MCF 10A (cell line): ENCODE measurements at regions of chr1 and their contacts with region 1.

Region 1: DNA sequence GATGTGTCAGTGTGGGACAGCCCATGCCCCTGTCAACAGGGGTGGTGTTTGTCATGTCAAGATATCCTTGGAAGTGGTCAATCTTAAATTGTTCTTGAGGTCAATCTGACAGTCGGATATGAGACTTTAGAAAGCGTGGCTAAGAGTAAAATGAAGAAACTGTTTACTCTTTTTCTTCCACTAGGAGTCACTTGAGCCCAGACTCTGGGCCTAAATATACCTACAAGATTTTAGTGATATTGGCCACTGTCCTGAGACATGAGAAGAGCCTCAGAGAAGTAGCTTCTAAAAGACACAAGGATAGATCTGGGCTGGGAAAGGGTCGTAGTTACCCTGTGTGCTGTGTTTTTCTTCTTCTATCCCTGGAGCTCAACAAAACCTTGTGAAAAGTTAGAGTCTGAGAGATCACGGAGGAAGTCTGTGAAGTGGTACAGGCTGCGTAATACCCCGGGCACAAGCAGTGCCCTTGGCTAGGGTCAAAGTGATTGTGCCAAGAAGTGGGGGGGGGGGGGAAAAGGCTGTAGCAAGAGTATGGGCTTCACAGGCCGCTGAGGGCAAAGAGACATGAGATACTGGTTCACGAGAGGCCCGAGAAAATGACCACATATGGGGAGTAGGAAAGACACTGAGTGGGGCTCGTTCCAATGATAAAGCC is 355.2 kb upstream of the GREM2 start:
- DNase-seq: peak; percentile 60
- H3K4me3 Mint-ChIP-seq: no peak overlapping the region
- H3K27ac Mint-ChIP-seq: no peak overlapping the region
- H3K4me1 Mint-ChIP-seq: no peaks in the 10 kb centered on the region
- H3K27me3 Mint-ChIP-seq: no peaks in the 10 kb centered on the region
- CTCF ChIP-seq: peak; percentile 76

Region 2: GRCh38 chr1:240732390-240732789 is 234.8 kb before region 1 on chr1:
- CTCF ChIA-PET with region 1: interaction called, 15 read pairs
- POLR2A ChIA-PET with region 1: interaction called, 3 read pairs
- intact Hi-C with region 1: no loop called
- DNase-seq: peak; percentile 86
- H3K4me3 Mint-ChIP-seq: no peak overlapping the region
- H3K27ac Mint-ChIP-seq: no peak overlapping the region
- H3K4me1 Mint-ChIP-seq: peaks cover 6% of the 10 kb centered on the region
- H3K27me3 Mint-ChIP-seq: no peaks in the 10 kb centered on the region
- CTCF ChIP-seq: peak; percentile 92

Region 3: DNA sequence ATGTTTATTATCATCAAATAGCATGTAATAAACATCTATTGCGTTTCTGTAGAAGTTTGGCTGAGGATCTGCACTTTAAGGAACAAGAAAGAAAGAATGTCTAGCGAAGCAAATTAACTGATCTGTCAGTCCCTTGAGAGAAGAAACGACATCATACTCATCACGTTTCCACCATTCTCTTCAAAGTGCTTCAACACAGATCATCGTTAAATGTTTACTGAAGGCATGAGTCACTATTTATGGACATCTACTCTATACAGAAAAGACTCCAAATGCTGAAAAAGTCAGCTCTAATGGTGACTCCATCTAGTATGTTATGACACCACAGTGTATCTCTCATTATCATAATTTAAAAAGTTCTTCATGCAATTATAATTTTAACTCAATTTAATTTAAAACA is 20.7 kb after region 1 on chr1:
- CTCF ChIA-PET with region 1: interaction called, 20 read pairs
- POLR2A ChIA-PET with region 1: interaction called, 4 read pairs
- intact Hi-C with region 1: no loop called
- DNase-seq: peak; percentile 49
- H3K4me3 Mint-ChIP-seq: no peak overlapping the region
- H3K27ac Mint-ChIP-seq: no peak overlapping the region
- H3K4me1 Mint-ChIP-seq: no peaks in the 10 kb centered on the region
- H3K27me3 Mint-ChIP-seq: no peaks in the 10 kb centered on the region
- CTCF ChIP-seq: no peak

Region 4: GRCh38 chr1:241077386-241078147 is 110.4 kb after region 1 on chr1:
- CTCF ChIA-PET with region 1: no interaction called
- POLR2A ChIA-PET with region 1: no interaction called
- intact Hi-C with region 1: no loop called
- DNase-seq: no peak
- H3K4me3 Mint-ChIP-seq: no peak overlapping the region
- H3K27ac Mint-ChIP-seq: no peak overlapping the region
- H3K4me1 Mint-ChIP-seq: peaks cover 6% of the 10 kb centered on the region
- H3K27me3 Mint-ChIP-seq: no peaks in the 10 kb centered on the region
- CTCF ChIP-seq: no peak

Region 5: GRCh38 chr1:241408170-241408569 is 441.0 kb after region 1 on chr1:
- CTCF ChIA-PET with region 1: interaction called, 4 read pairs
- POLR2A ChIA-PET with region 1: interaction called, 3 read pairs
- intact Hi-C with region 1: loop called (anchors 1 kb)
- DNase-seq: peak; percentile 51
- H3K4me3 Mint-ChIP-seq: no peak overlapping the region
- H3K27ac Mint-ChIP-seq: no peak overlapping the region
- H3K4me1 Mint-ChIP-seq: peaks cover 8% of the 10 kb centered on the region
- H3K27me3 Mint-ChIP-seq: peaks cover 13% of the 10 kb centered on the region
- CTCF ChIP-seq: peak; percentile 17

Region 6: GRCh38 chr1:241499910-241500309 is 532.7 kb after region 1 on chr1:
- CTCF ChIA-PET with region 1: interaction called, 31 read pairs
- POLR2A ChIA-PET with region 1: no interaction called
- intact Hi-C with region 1: loop called (anchors 1 kb)
- DNase-seq: peak; percentile 65
- H3K4me3 Mint-ChIP-seq: no peak overlapping the region
- H3K27ac Mint-ChIP-seq: no peak overlapping the region
- H3K4me1 Mint-ChIP-seq: no peaks in the 10 kb centered on the region
- H3K27me3 Mint-ChIP-seq: no peaks in the 10 kb centered on the region
- CTCF ChIP-seq: peak; percentile 84

Region 7: DNA sequence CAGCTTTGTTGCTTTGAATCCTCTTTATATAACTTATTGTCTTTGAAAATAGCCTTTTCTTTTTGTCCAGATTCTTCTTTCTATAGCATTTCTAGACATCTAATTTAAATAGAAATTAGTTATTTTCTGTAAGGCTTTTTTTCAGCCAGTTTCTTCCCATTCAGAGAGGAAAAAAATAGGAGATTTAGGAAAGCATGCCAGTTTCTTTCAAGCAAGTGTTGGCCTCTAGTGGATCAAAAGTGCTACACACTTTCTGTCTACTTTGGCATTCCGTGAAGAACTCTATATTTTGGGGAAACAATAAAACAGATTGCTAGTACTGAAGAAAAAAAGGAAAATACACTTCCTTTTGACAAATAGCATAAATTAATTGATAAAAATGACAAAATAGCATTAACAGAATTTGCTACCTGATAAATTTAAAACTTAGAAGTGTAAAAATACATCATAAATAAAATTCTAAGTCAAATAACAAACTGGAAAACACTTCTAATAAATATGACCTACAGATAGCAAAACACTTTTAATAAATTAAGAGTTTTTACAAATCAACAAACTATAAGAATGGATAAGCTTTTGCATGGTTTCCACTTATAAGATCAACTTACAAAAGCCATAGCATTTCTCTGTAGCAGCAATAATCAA is 867.7 kb after region 1 on chr1:
- CTCF ChIA-PET with region 1: no interaction called
- POLR2A ChIA-PET with region 1: no interaction called
- intact Hi-C with region 1: loop called (anchors 2 kb)
- DNase-seq: peak; percentile 75
- H3K4me3 Mint-ChIP-seq: no peak overlapping the region
- H3K27ac Mint-ChIP-seq: peak overlapping the region; percentile 36
- H3K4me1 Mint-ChIP-seq: peaks cover 22% of the 10 kb centered on the region
- H3K27me3 Mint-ChIP-seq: no peaks in the 10 kb centered on the region
- CTCF ChIP-seq: peak; percentile 98